MCF 10A (cell line): ENCODE measurements at regions of chr6 and their contacts with region 1.

Region 1: GRCh38 chr6:117840541-117840983 is 66.5 kb upstream of the SLC35F1 start:
- DNase-seq: peak; percentile 82
- H3K4me3 Mint-ChIP-seq: no peak overlapping the region
- H3K27ac Mint-ChIP-seq: no peak overlapping the region
- H3K4me1 Mint-ChIP-seq: no peaks in the 10 kb centered on the region
- H3K27me3 Mint-ChIP-seq: peaks cover 73% of the 10 kb centered on the region
- CTCF ChIP-seq: peak; percentile 37

Region 2: GRCh38 chr6:117829594-117830319 is 10.8 kb before region 1 on chr6:
- CTCF ChIA-PET with region 1: interaction called, 20 read pairs
- POLR2A ChIA-PET with region 1: no interaction called
- intact Hi-C with region 1: no loop called
- DNase-seq: peak; percentile 59
- H3K4me3 Mint-ChIP-seq: peak overlapping the region; percentile 37
- H3K27ac Mint-ChIP-seq: no peak overlapping the region
- H3K4me1 Mint-ChIP-seq: peaks cover 4% of the 10 kb centered on the region
- H3K27me3 Mint-ChIP-seq: peaks cover 90% of the 10 kb centered on the region
- CTCF ChIP-seq: peak; percentile 52

Region 3: GRCh38 chr6:118263921-118264486 is 423.4 kb after region 1 on chr6:
- CTCF ChIA-PET with region 1: interaction called, 22 read pairs
- POLR2A ChIA-PET with region 1: interaction called, 3 read pairs
- intact Hi-C with region 1: loop called (anchors 1 kb)
- DNase-seq: peak; percentile 53
- H3K4me3 Mint-ChIP-seq: no peak overlapping the region
- H3K27ac Mint-ChIP-seq: no peak overlapping the region
- H3K4me1 Mint-ChIP-seq: no peaks in the 10 kb centered on the region
- H3K27me3 Mint-ChIP-seq: no peaks in the 10 kb centered on the region
- CTCF ChIP-seq: peak; percentile 33

Region 4: DNA sequence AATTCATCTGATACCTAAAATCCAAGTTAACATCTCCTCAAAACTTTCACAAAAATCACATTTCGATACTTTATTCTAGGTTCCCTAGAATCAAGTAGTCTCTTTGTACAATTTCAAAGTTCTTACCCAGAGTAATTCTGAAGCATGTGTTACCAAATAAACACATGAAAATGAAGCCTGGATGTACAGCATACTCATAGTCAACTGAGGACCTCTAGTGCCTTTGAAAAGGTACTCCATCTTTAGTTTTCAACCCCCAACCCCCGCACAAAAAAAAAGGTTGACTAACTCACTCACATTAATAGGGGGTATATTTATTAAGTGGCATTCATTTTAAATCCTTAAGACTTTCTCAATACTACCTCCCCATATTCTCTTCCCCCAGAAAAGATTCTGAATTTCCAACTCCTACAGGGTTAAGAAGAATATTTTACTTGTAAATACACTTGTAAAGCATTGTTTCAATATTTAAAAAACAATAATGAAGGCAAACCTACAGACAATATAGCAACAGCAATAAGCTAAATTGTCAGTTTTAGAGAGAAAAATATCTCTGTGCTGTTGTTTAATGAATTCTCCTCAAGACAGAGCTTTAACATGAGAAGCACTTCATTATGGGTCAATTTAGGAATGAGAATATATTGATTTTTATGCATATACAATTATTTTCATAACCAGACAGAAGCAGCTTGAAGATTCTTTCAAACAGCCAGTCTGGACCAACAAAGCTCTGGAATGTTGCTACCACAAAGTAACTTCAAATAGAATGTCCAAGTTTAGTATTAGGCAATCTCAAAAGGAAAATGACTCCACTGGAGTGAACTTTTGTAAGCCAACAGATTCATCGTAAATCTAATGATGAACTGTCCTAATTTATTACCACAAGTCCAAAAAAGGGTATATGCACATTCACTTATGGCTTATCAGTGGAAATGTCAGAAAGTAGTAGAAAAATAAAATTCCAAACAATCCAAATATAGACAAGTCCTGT is 710.8 kb after region 1 on chr6:
- CTCF ChIA-PET with region 1: interaction called, 5 read pairs
- POLR2A ChIA-PET with region 1: no interaction called
- intact Hi-C with region 1: loop called (anchors 1 kb)
- DNase-seq: peak; percentile 56
- H3K4me3 Mint-ChIP-seq: no peak overlapping the region
- H3K27ac Mint-ChIP-seq: no peak overlapping the region
- H3K4me1 Mint-ChIP-seq: peaks cover 12% of the 10 kb centered on the region
- H3K27me3 Mint-ChIP-seq: no peaks in the 10 kb centered on the region
- CTCF ChIP-seq: peak; percentile 59

Region 5: GRCh38 chr6:118776607-118777549 is 936.3 kb after region 1 on chr6:
- CTCF ChIA-PET with region 1: interaction called, 3 read pairs
- POLR2A ChIA-PET with region 1: no interaction called
- intact Hi-C with region 1: loop called (anchors 10 kb)
- DNase-seq: peak; percentile 85
- H3K4me3 Mint-ChIP-seq: peak overlapping the region; percentile 49
- H3K27ac Mint-ChIP-seq: no peak overlapping the region
- H3K4me1 Mint-ChIP-seq: peaks cover 13% of the 10 kb centered on the region
- H3K27me3 Mint-ChIP-seq: no peaks in the 10 kb centered on the region
- CTCF ChIP-seq: peak; percentile 51